IMR-90 (cell line): ENCODE measurements at regions of chr18 and their contacts with region 1.

Region 1: GRCh38 chr18:61635901-61636528 is 256.8 kb downstream of the RNF152 start:
- DNase-seq: peak; percentile 63
- ATAC-seq: peak; percentile 82
- H3K4me3 ChIP-seq: no peak overlapping the region
- H3K27ac ChIP-seq: no peak overlapping the region
- H3K4me1 ChIP-seq: peaks cover 14% of the 10 kb centered on the region; the same call in 1 of the 2 replicates
- H3K27me3 ChIP-seq: no peaks in the 10 kb centered on the region
- CTCF ChIP-seq: peak; percentile 85
- POLR2A ChIP-seq: 0 out of 2 replicates have a peak, but pooled peaks have one; percentile 41
- RAD21 ChIP-seq: peak; percentile 87

Region 2: DNA sequence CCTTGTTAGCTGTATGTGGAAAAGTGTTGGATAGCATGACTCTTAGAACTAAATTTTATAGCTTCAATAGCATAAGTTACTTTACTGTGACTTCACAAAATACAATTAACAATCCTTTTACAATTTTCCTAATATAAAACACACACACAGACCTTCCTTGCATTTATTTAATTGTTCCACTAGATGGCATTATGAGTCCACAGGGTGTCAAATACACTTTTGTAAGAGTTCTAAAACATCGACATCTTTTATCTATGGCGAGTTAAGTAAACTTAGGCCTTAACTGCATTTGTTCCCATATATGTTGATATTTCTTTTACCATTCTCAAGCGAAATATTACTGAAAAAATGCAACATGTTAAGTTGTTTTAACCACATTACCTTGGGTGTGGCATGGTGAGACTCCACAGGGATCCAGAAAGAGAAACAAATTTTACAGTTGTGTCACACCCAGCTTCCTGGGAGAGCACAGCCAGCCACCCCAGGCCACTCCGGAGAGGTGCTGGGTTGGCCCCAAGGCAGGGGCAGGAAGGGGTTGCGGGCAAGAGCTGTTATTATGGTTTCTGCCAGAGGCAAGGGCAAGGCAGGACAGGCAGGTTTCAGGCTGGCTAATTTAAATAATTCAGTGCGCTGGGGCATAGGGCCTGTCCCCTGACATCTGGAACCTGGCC is 951.0 kb before region 1 on chr18:
- CTCF ChIA-PET with region 1: no interaction called
- POLR2A ChIA-PET with region 1: no interaction called
- dilution Hi-C with region 1: no loop called
- in situ Hi-C with region 1: no loop called
- intact Hi-C with region 1: loop called (anchors 5 kb)
- DNase-seq: peak; percentile 17
- ATAC-seq: no peak
- H3K4me3 ChIP-seq: no peak overlapping the region
- H3K27ac ChIP-seq: no peak overlapping the region
- H3K4me1 ChIP-seq: no peaks in the 10 kb centered on the region
- H3K27me3 ChIP-seq: no peaks in the 10 kb centered on the region
- CTCF ChIP-seq: peak; percentile 46
- POLR2A ChIP-seq: no peak
- RAD21 ChIP-seq: peak; percentile 43

Region 3: DNA sequence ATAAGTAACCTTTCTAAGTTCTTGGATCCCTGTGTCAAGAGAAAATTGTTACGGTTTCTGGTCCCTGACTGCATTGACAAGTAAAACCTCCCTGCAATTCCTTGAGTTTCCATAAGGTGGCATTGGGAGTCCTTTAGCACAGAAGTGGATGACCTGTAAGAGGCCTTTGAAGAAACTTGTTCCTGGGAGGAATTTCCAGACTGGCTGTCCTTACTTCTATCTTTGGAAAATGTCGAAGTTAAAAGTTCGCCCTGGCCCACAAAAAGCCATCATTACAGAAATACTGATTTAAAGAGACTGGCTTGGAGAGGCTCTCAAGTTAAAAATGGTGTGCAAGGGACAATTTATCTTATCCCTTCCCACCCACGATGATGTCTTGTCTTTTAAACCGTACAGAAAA is 84.4 kb before region 1 on chr18:
- CTCF ChIA-PET with region 1: no interaction called
- POLR2A ChIA-PET with region 1: no interaction called
- dilution Hi-C with region 1: no loop called
- in situ Hi-C with region 1: no loop called
- intact Hi-C with region 1: loop called (anchors 2 kb)
- DNase-seq: peak; percentile 88
- ATAC-seq: peak; percentile 98
- H3K4me3 ChIP-seq: no peak overlapping the region
- H3K27ac ChIP-seq: no peak overlapping the region
- H3K4me1 ChIP-seq: no peaks in the 10 kb centered on the region
- H3K27me3 ChIP-seq: no peaks in the 10 kb centered on the region
- CTCF ChIP-seq: peak; percentile 86
- POLR2A ChIP-seq: no peak
- RAD21 ChIP-seq: peak; percentile 88

Region 4: GRCh38 chr18:61589713-61590065 is 46.3 kb before region 1 on chr18:
- CTCF ChIA-PET with region 1: no interaction called
- POLR2A ChIA-PET with region 1: no interaction called
- dilution Hi-C with region 1: no loop called
- in situ Hi-C with region 1: no loop called
- intact Hi-C with region 1: loop called (anchors 2 kb)
- DNase-seq: peak; percentile 86
- ATAC-seq: peak; percentile 71
- H3K4me3 ChIP-seq: no peak overlapping the region
- H3K27ac ChIP-seq: no peak overlapping the region
- H3K4me1 ChIP-seq: peaks cover 9% of the 10 kb centered on the region
- H3K27me3 ChIP-seq: no peaks in the 10 kb centered on the region
- CTCF ChIP-seq: no peak
- POLR2A ChIP-seq: no peak
- RAD21 ChIP-seq: no peak

Region 5: GRCh38 chr18:61719671-61720070 is 83.7 kb after region 1 on chr18:
- CTCF ChIA-PET with region 1: no interaction called
- POLR2A ChIA-PET with region 1: no interaction called
- dilution Hi-C with region 1: no loop called
- in situ Hi-C with region 1: no loop called
- intact Hi-C with region 1: no loop called
- DNase-seq: no peak
- ATAC-seq: no peak
- H3K4me3 ChIP-seq: no peak overlapping the region
- H3K27ac ChIP-seq: no peak overlapping the region
- H3K4me1 ChIP-seq: no peaks in the 10 kb centered on the region
- H3K27me3 ChIP-seq: no peaks in the 10 kb centered on the region
- CTCF ChIP-seq: no peak
- POLR2A ChIP-seq: no peak
- RAD21 ChIP-seq: no peak

Region 6: DNA sequence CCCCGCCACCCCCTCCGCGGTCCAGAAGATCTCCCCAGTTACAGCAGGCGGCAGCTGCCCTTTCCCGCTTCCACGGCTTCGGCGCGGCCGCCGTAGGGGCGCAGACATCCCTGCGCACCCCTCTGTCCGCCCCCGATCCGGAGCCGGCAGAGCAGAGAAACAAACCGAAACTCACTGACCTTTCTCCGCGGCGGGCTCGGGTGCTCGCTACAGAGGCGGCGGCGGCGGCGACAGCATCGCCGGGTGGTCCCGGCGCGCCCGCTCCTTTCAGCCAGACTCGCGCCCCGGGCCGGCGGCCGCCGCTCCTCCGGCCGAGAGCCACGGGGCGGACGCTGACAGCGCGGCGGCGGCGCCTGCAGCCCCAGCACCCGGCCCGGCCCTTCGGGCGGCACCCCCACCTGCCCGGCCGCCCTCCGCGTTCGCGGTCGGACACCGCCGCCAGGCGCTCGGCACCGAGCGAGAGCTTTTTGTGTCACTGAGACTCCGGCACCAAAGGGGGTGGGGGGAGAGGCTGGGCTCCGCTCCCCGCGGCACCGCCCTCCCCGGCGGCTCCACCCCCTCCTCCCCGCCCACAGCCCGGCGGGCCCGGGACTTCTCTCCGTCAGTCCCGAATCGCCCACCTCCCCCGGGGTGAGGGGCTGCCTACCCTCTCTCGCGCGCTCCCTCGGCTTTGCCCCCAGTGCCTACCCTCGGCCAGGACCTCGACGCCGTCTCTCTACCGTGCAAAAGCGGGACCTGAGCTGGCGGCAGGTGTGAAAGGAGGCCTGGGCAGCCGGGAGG is 258.1 kb after region 1 on chr18:
- CTCF ChIA-PET with region 1: interaction called, 4 read pairs
- POLR2A ChIA-PET with region 1: interaction called, 8 read pairs
- dilution Hi-C with region 1: no loop called
- in situ Hi-C with region 1: no loop called
- intact Hi-C with region 1: loop called (anchors 1 kb)
- DNase-seq: peak; percentile 64
- ATAC-seq: peak; percentile 93
- H3K4me3 ChIP-seq: peak overlapping the region; percentile 95
- H3K27ac ChIP-seq: peak overlapping the region; percentile 74
- H3K4me1 ChIP-seq: peaks cover 7% of the 10 kb centered on the region
- H3K27me3 ChIP-seq: no peaks in the 10 kb centered on the region
- CTCF ChIP-seq: peak; percentile 54
- POLR2A ChIP-seq: peak; percentile 76
- RAD21 ChIP-seq: peak; percentile 60